Caco-2 (cell line): ENCODE measurements at regions of chr14 and their contacts with region 1.

Region 1: DNA sequence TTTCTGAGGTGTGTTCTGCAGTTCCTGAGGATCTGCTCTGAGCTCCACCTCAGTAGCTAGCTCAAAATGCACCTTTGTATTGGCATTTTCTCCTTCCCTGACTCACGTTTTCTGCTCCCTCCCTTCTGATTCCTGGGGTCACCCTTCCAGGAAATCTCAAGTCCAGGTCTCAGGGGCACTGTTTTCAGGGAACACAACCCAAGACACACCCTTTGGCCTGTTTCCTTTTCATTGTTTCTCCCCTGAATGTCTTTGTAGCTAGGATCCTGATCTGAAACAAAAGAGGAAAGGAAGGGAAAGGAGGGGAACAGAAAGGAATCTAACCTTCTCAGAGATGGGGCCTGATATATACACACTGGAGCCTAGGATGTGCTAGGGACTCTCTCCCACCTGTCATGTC is 7.3 kb upstream of the RIPK3 start:
- DNase-seq: no peak
- H3K4me3 ChIP-seq: no peak overlapping the region
- H3K4me3 Mint-ChIP-seq: no peak overlapping the region
- H3K27ac Mint-ChIP-seq: no peak overlapping the region
- H3K4me1 ChIP-seq: no peaks in the 10 kb centered on the region
- H3K4me1 Mint-ChIP-seq: peaks cover 6% of the 10 kb centered on the region
- H3K27me3 ChIP-seq: no peaks in the 10 kb centered on the region; the same call in 1 of the 2 replicates
- H3K27me3 Mint-ChIP-seq: peaks cover 13% of the 10 kb centered on the region
- CTCF ChIP-seq: no peak

Region 2: GRCh38 chr14:23306410-23307145 is 1040.6 kb before region 1 on chr14 and contains the start of gene BCL2L2:
- CTCF ChIA-PET with region 1: no interaction called
- POLR2A ChIA-PET with region 1: no interaction called
- intact Hi-C with region 1: no loop called
- DNase-seq: peak; percentile 91 to 94
- H3K4me3 ChIP-seq: peak within 1 kb of the TSS; percentile 68
- H3K4me3 Mint-ChIP-seq: peak within 1 kb of the TSS; percentile 75
- H3K27ac Mint-ChIP-seq: peak within 1 kb of the TSS; percentile 78
- H3K4me1 ChIP-seq: peaks cover 15% of the 10 kb centered on the region; the same call in 1 of the 2 replicates
- H3K4me1 Mint-ChIP-seq: peaks cover 14% of the 10 kb centered on the region
- H3K27me3 ChIP-seq: no peaks in the 10 kb centered on the region
- H3K27me3 Mint-ChIP-seq: no peaks in the 10 kb centered on the region
- CTCF ChIP-seq: no peak
- total RNA-seq, gene BCL2L2: 19.1 and 20.8 TPM in 2 replicates

Region 3: DNA sequence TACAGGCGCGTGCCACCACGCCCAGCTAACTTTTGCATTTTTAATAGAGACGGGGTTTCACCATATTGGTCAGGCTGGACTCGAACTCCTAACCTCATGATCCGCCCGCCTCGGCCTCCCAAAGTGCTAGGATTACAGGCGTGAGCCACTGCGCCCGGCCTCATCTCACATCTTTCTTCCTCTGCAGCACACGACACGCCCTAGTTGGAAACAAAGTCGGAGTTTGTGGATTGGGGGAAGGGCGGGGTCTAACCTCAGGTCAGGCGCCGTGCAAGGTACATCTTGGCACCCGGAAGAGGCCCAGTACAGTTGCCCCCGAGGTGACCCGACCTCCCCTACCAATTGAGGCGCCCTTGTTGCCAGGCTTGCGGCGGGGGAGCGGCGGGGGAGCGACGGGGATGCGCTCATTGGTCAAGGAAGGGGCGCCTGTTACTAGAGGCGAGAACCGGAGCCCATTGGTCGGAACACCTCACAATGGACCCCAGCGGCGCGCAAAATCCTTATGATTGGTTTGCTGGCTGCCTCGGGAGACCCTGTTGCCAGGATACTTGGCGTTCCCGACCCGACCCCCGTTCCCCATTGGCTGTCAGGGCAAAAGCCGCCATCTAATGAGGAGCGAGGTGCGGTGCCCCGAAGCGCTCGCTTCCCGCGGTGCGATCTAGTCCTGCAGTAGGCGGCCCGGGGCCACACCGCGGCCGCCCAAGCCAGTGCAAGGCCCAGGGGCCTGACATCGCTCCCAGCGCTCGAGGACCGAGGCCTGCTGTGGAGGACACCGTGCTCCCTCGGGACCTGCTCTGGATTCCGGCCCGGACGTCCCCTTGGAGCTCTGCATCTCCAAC is 175.5 kb before region 1 on chr14 and contains the start of gene REC8:
- CTCF ChIA-PET with region 1: no interaction called
- POLR2A ChIA-PET with region 1: no interaction called
- intact Hi-C with region 1: no loop called
- DNase-seq: no peak
- H3K4me3 ChIP-seq: no peak within 1 kb of the TSS
- H3K4me3 Mint-ChIP-seq: no peak within 1 kb of the TSS
- H3K27ac Mint-ChIP-seq: no peak within 1 kb of the TSS
- H3K4me1 ChIP-seq: no peaks in the 10 kb centered on the region
- H3K4me1 Mint-ChIP-seq: no peaks in the 10 kb centered on the region
- H3K27me3 ChIP-seq: no peaks in the 10 kb centered on the region
- H3K27me3 Mint-ChIP-seq: no peaks in the 10 kb centered on the region
- CTCF ChIP-seq: no peak
- total RNA-seq, gene REC8: 8.4 and 10.6 TPM in 2 replicates

Region 4: GRCh38 chr14:24422261-24422660 is 75.1 kb after region 1 on chr14:
- CTCF ChIA-PET with region 1: no interaction called
- POLR2A ChIA-PET with region 1: no interaction called
- intact Hi-C with region 1: loop called (anchors 5 kb)
- DNase-seq: no peak
- H3K4me3 ChIP-seq: no peak overlapping the region
- H3K4me3 Mint-ChIP-seq: no peak overlapping the region
- H3K27ac Mint-ChIP-seq: no peak overlapping the region
- H3K4me1 ChIP-seq: peaks cover 41% of the 10 kb centered on the region
- H3K4me1 Mint-ChIP-seq: peaks cover 15% of the 10 kb centered on the region
- H3K27me3 ChIP-seq: no peaks in the 10 kb centered on the region
- H3K27me3 Mint-ChIP-seq: no peaks in the 10 kb centered on the region
- CTCF ChIP-seq: no peak